SK-N-SH (cell line): ENCODE measurements at regions of chr9 and their contacts with region 1.

Region 1: DNA sequence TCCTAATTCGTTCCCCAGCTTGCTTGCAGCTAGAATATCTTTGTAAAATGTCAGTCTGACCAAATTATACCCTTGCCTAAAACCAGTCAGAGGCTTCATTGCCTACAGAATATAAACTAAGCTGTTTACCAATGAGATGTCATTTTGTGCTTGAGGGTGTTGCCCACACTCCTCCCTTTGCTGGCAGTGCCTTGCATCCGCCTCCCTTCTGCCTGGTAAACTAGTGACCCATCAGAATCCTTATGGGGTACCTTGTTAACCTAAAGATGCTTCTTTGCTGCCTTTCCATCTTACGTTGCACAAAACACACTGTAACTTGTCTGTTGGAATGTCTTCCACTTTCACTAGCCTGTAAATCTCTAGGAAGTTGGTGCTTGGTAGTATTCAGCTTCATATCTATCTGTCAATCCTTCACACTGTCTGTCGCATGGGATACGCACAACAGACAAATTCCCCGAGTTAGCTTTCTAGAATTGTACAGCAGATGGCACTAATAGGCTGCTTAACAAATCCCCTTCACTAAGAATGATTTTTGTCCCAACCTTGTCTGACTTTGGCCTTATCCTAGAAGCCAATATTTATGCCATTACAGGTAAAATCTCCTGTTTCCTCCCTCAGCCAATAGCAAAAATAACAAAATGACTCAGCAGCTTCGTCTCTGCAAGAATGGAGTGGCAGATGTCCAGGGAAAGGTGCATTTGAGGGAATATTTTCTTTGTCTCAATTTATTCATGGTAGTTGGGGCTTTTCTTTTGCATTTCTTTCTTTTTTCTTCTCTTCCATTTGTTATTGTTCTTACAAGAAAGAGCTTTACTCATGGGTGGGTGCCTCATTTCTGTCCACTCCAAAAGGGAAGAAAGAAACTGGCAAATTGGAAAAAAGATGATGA is 3.0 kb downstream of the NUDT2 start:
- DNase-seq: peak; percentile 46
- H3K4me3 ChIP-seq: no peak overlapping the region; a peak in 1 of 4 replicates
- H3K27ac ChIP-seq: no peak overlapping the region
- H3K4me1 ChIP-seq: peaks cover 0 to 6% of the 10 kb centered on the region in 2 experiments; a peak in 2 of 4 replicates
- H3K27me3 ChIP-seq: no peaks in the 10 kb centered on the region
- CTCF ChIP-seq: peak; percentile 62
- EP300 ChIP-seq: no peak
- RAD21 ChIP-seq: peak; percentile 88

Region 2: DNA sequence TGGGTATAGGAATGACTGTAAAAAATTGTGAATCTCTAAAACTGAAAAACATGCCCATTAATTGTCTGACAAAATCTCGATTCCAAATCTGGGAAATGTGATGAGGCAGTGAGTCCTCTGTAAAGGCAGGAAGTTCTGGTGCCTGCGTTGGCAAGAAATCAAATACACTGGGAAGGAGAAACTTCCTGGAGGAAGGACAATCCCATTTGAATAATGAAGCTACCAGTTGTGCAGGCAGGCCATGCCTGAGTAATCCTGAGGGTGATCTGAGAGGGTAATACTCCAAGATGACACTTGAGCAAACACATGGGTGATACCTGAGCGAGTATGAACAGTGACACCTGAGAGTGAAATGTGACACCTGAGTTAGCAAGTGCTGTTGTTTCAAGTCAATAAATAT is 52.9 kb before region 1 on chr9:
- CTCF ChIA-PET with region 1: no interaction called
- POLR2A ChIA-PET with region 1: no interaction called
- DNase-seq: peak; percentile 39
- H3K4me3 ChIP-seq: no peak overlapping the region
- H3K27ac ChIP-seq: peak overlapping the region in 1 of 2 experiments; percentile 18; a peak in 2 of 4 replicates
- H3K4me1 ChIP-seq: peaks cover 0 to 8% of the 10 kb centered on the region in 2 experiments; a peak in 3 of 4 replicates
- H3K27me3 ChIP-seq: no peaks in the 10 kb centered on the region
- CTCF ChIP-seq: no peak
- EP300 ChIP-seq: no peak
- RAD21 ChIP-seq: no peak

Region 3: DNA sequence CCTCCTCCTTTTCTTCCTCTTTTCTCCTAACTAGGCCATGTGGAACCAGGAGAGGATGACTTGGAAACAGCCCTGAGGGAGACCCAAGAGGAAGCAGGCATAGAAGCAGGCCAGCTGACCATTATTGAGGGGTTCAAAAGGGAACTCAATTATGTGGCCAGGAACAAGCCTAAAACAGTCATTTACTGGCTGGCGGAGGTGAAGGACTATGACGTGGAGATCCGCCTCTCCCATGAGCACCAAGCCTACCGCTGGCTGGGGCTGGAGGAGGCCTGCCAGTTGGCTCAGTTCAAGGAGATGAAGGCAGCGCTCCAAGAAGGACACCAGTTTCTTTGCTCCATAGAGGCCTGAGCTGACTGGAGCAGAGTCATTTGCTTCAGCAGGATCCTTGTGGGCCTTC is 10.8 kb after region 1 on chr9:
- CTCF ChIA-PET with region 1: interaction called, 14 read pairs
- POLR2A ChIA-PET with region 1: no interaction called
- DNase-seq: no peak
- H3K4me3 ChIP-seq: no peak overlapping the region
- H3K27ac ChIP-seq: no peak overlapping the region
- H3K4me1 ChIP-seq: peaks cover 0 to 19% of the 10 kb centered on the region in 2 experiments; a peak in 1 of 4 replicates
- H3K27me3 ChIP-seq: no peaks in the 10 kb centered on the region
- CTCF ChIP-seq: no peak
- EP300 ChIP-seq: no peak
- RAD21 ChIP-seq: no peak

Region 4: GRCh38 chr9:34376596-34377403 is 44.5 kb after region 1 on chr9 and contains the start of gene MYORG:
- CTCF ChIA-PET with region 1: interaction called, 149 read pairs
- POLR2A ChIA-PET with region 1: no interaction called
- DNase-seq: peak; percentile 98
- H3K4me3 ChIP-seq: peak within 1 kb of the TSS; percentile 83 to 84
- H3K27ac ChIP-seq: peak within 1 kb of the TSS in 1 of 2 experiments; percentile 76; a peak in 2 of 4 replicates
- H3K4me1 ChIP-seq: peaks cover 7 to 40% of the 10 kb centered on the region in 2 experiments; a peak in 3 of 4 replicates
- H3K27me3 ChIP-seq: no peaks in the 10 kb centered on the region
- CTCF ChIP-seq: no peak
- EP300 ChIP-seq: no peak
- RAD21 ChIP-seq: no peak
- polyA plus RNA-seq, gene MYORG: 0.97 and 1.1 TPM in 2 replicates